Endothelial cell of umbilical vein (primary cell): ENCODE measurements at regions of chr1 and their contacts with region 1.

Region 1: GRCh38 chr1:231387770-231388669 is 34.1 kb downstream of the EGLN1 start:
- DNase-seq: peak; percentile 88
- H3K4me3 ChIP-seq: no peak overlapping the region
- H3K27ac ChIP-seq: peak overlapping the region; percentile 98
- H3K4me1 ChIP-seq: peaks cover 39% of the 10 kb centered on the region
- H3K27me3 ChIP-seq: no peaks in the 10 kb centered on the region
- CTCF ChIP-seq: no peak
- POLR2A ChIP-seq: peak; percentile 51

Region 2: GRCh38 chr1:231376875-231377549 is 11.0 kb before region 1 on chr1:
- CTCF ChIA-PET with region 1: interaction called, 4 read pairs
- POLR2A ChIA-PET with region 1: no interaction called
- dilution Hi-C with region 1: no loop called
- intact Hi-C with region 1: loop called (anchors 1 kb)
- DNase-seq: no peak
- H3K4me3 ChIP-seq: no peak overlapping the region
- H3K27ac ChIP-seq: no peak overlapping the region
- H3K4me1 ChIP-seq: peaks cover 20% of the 10 kb centered on the region
- H3K27me3 ChIP-seq: no peaks in the 10 kb centered on the region
- CTCF ChIP-seq: no peak
- POLR2A ChIP-seq: no peak

Region 3: GRCh38 chr1:231407547-231408396 is 19.8 kb after region 1 on chr1:
- CTCF ChIA-PET with region 1: no interaction called
- POLR2A ChIA-PET with region 1: no interaction called
- dilution Hi-C with region 1: no loop called
- intact Hi-C with region 1: no loop called
- DNase-seq: peak; percentile 75
- H3K4me3 ChIP-seq: no peak overlapping the region
- H3K27ac ChIP-seq: peak overlapping the region; percentile 45
- H3K4me1 ChIP-seq: peaks cover 20% of the 10 kb centered on the region
- H3K27me3 ChIP-seq: no peaks in the 10 kb centered on the region
- CTCF ChIP-seq: no peak
- POLR2A ChIP-seq: no peak